Activated CD4-positive, alpha-beta T cell treated with anti-CD3 and anti-CD28 coated beads for 36 hours (primary cell): ENCODE measurements at regions of chr10 and their contacts with region 1.

Region 1: GRCh38 chr10:5684318-5684970 is at the start of gene TASOR2:
- DNase-seq: peak; percentile 98
- ATAC-seq: peak; percentile 91
- H3K4me3 Mint-ChIP-seq: peak within 1 kb of the TSS; percentile 96
- H3K27ac Mint-ChIP-seq: peak within 1 kb of the TSS; percentile 92
- H3K4me1 Mint-ChIP-seq: peaks cover 56% of the 10 kb centered on the region
- H3K27me3 Mint-ChIP-seq: no peaks in the 10 kb centered on the region
- total RNA-seq, gene TASOR2: 41.9 to 45.4 TPM

Region 2: DNA sequence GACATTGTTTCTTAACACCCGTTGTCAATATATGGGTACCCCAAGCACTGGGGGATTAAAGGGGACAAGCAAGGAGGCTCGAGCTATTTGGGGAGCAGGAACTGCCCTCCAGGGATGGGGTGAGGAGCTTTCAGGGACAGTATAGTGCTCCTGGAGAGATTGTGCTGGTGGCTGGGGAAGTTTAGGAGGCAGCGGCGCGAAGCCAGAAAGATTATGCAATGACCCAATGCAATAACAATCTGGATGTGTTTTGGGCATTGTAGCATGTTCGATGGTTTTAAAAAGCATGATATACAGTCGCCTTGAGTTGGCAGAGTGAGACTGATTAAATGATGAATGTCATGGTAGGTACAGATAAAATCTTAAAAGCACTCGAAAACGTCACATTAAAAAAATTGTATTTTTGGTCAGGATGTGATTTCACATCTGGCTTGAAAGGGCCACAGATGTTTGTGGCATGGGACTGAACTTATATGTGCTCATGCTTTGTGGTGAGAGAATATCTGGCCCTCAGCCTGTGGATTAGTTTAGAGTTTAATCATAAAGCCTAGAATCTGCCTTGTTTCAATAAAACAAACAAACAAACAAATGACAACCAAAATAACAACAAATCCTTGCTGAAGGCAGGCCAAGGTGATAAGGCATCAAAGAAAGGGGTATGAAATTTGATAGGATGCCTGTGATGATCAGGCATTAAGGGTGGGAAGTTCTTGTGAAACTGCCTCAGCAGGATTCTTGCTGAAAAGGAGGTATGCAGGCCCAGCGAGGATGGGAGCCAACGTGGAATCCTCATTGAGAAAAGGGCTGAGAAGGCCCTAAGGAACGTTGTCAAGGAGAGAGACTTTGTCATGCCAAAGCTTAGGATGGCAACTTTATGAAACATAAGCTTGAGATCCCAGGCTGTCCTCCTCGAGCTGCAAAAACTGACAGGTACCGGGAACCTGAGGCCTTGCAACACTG is 1482.3 kb before region 1 on chr10:
- CTCF ChIA-PET with region 1: no interaction called
- POLR2A ChIA-PET with region 1: no interaction called
- intact Hi-C with region 1: no loop called
- DNase-seq: no peak
- ATAC-seq: no peak
- H3K4me3 Mint-ChIP-seq: no peak overlapping the region
- H3K27ac Mint-ChIP-seq: no peak overlapping the region
- H3K4me1 Mint-ChIP-seq: peaks cover 4% of the 10 kb centered on the region
- H3K27me3 Mint-ChIP-seq: no peaks in the 10 kb centered on the region

Region 3: DNA sequence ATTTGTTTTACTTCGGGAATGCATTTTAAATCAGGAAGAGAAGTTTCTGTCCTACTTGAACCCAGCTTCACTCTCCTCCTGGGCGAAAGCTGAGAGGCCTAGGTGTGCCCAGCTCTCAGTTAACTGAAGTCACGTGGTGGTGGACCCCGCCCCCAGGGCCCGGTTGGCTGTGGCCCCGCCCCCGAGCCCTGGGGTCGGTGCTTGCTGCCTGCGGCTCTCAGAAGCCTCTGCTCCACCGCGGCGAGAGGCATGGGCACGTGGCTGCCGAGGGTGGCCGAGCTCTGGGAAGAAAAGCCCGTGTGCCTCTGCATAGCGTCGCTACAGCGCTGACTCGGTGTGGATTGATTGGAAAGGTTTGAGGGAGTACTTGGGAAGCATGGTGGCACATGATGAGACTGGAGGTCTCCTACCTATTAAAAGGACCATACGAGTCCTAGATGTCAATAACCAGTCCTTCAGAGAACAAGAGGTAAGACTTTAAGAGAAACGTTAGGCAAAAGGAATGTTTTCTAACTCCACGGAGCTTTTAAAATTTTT is 238.0 kb before region 1 on chr10:
- CTCF ChIA-PET with region 1: no interaction called
- POLR2A ChIA-PET with region 1: no interaction called
- intact Hi-C with region 1: loop called in 1 of 2 experiments (anchors 5 kb)
- DNase-seq: peak; percentile 86
- ATAC-seq: peak; percentile 71
- H3K4me3 Mint-ChIP-seq: peak overlapping the region; percentile 70
- H3K27ac Mint-ChIP-seq: peak overlapping the region; percentile 45
- H3K4me1 Mint-ChIP-seq: peaks cover 53% of the 10 kb centered on the region
- H3K27me3 Mint-ChIP-seq: no peaks in the 10 kb centered on the region

Region 4: DNA sequence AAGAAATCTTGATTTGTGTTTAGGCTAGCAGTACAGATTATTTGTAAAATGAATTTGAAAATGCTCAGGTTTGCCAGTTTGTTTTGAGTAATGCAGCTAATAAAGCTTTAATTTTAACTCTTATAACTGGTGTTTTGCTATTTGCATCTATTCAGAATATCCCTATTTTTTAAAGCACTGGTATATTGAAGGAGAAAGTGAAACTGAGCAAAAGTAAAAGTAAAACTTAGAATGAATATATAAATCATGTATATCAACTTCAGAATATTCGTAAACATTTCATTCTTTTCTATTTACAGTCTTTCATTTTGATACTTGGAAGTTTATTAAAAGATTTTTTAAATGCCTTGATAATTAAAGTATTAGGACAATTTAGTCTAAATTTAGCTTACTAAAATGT is 26.4 kb after region 1 on chr10:
- CTCF ChIA-PET with region 1: interaction called, 5 read pairs
- POLR2A ChIA-PET with region 1: no interaction called
- intact Hi-C with region 1: loop called (anchors 2 kb)
- DNase-seq: no peak
- ATAC-seq: peak; percentile 49
- H3K4me3 Mint-ChIP-seq: no peak overlapping the region
- H3K27ac Mint-ChIP-seq: no peak overlapping the region
- H3K4me1 Mint-ChIP-seq: peaks cover 58% of the 10 kb centered on the region
- H3K27me3 Mint-ChIP-seq: no peaks in the 10 kb centered on the region

Region 5: DNA sequence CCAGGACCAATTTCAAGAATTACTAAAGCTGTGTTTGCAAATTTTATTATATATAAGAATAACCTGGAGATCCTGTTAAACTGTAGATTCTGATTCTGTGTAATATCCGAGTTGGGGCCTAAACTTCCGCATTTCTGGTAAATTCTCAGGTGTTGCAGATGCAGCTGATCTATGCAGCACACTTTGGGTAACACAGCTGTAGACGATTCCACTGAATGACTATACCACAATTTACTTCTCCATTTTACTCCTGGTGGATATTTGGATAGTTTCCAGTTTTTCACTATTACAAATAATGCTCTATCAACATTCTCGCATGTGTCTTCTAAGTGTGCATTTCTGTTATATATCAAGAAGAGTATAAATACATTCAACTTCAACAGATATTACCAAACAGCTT is 121.3 kb after region 1 on chr10:
- CTCF ChIA-PET with region 1: no interaction called
- POLR2A ChIA-PET with region 1: no interaction called
- intact Hi-C with region 1: no loop called
- DNase-seq: no peak
- ATAC-seq: no peak
- H3K4me3 Mint-ChIP-seq: no peak overlapping the region
- H3K27ac Mint-ChIP-seq: no peak overlapping the region
- H3K4me1 Mint-ChIP-seq: peaks cover 52% of the 10 kb centered on the region
- H3K27me3 Mint-ChIP-seq: no peaks in the 10 kb centered on the region

Region 6: DNA sequence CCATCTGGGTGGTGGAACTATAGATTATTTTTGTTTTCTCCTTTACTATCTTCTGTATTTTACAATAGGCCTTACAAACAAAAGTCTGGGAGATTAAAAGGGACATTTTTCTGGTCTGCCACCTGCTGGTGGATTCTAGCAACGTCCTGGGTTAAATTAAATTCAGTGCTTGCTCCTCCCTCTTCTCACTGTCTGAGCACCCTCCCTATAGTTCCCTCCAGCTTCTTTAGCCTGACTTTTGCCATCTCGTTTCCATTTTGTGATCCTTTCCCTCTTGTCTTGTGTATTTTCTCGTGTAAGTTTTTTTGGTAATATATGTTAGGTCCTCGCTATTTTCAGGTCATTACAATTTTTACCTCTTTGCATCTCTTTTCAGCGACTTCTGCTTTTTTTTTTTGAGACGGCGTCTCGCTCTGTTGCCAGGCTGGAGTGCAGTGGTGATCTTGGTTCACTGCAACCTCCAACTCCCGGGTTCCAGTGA is 189.1 kb after region 1 on chr10:
- CTCF ChIA-PET with region 1: interaction called, 3 read pairs
- POLR2A ChIA-PET with region 1: no interaction called
- intact Hi-C with region 1: loop called in 1 of 2 experiments (anchors 1 kb)
- DNase-seq: peak; percentile 77
- ATAC-seq: peak; percentile 95
- H3K4me3 Mint-ChIP-seq: no peak overlapping the region
- H3K27ac Mint-ChIP-seq: no peak overlapping the region
- H3K4me1 Mint-ChIP-seq: peaks cover 4% of the 10 kb centered on the region
- H3K27me3 Mint-ChIP-seq: no peaks in the 10 kb centered on the region

Region 7: DNA sequence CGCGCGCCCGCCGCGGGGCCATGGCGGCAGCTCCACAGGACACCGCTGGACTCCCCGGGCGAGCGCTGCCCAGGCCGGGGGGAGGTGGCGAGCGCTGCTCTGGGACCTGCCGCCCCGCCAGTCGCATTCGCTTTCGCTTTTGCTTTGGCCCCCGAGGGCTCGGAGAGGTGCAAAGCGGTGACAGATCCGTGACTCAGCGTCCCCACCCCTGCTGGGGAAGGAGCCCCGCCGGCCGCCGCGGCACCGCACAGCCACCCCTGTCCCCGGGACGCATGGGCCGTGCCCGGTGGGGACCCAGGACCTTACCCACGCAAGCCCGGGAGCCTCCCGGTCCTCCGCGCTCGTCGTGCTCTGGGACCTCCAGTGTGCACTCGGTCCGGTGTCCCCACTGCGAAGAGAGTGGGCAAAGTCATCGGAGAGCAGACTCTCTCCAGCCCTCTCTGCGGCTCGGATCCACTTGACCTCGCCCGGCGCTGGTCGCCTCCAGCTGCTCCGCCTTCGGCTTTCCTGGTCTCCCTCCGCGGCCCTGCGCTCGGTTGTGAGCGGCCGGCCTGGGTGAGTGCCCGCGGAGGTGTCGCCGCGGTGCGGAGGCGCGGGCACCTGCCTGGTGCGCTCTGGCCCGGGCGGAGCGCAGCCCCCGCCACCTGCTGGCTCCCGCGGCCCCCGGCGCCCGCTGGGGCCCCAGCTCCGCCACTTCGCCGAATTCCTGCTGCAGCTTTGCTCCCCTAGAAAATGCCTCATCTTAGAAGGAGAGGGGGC is 293.2 kb after region 1 on chr10 and contains the start of gene IL15RA:
- CTCF ChIA-PET with region 1: no interaction called
- POLR2A ChIA-PET with region 1: no interaction called
- intact Hi-C with region 1: loop called in 1 of 2 experiments (anchors 2 kb)
- DNase-seq: peak; percentile 95
- ATAC-seq: peak; percentile 72
- H3K4me3 Mint-ChIP-seq: peak within 1 kb of the TSS; percentile 94
- H3K27ac Mint-ChIP-seq: peak within 1 kb of the TSS; percentile 95
- H3K4me1 Mint-ChIP-seq: peaks cover 28% of the 10 kb centered on the region
- H3K27me3 Mint-ChIP-seq: no peaks in the 10 kb centered on the region
- total RNA-seq, gene IL15RA: 19.7 to 22.1 TPM